Activated naive CD4-positive, alpha-beta T cell treated with anti-CD3 and anti-CD28 coated beads for 36 hours (primary cell): ENCODE measurements at regions of chr6 and their contacts with region 1.

Region 1: GRCh38 chr6:149934249-149935156 is 7.3 kb upstream of the ULBP2 start:
- DNase-seq: peak; percentile 84
- H3K4me3 Mint-ChIP-seq: no peak overlapping the region
- H3K27ac Mint-ChIP-seq: no peak overlapping the region
- H3K4me1 Mint-ChIP-seq: peaks cover 17% of the 10 kb centered on the region
- H3K27me3 Mint-ChIP-seq: peaks cover 71% of the 10 kb centered on the region

Region 2: DNA sequence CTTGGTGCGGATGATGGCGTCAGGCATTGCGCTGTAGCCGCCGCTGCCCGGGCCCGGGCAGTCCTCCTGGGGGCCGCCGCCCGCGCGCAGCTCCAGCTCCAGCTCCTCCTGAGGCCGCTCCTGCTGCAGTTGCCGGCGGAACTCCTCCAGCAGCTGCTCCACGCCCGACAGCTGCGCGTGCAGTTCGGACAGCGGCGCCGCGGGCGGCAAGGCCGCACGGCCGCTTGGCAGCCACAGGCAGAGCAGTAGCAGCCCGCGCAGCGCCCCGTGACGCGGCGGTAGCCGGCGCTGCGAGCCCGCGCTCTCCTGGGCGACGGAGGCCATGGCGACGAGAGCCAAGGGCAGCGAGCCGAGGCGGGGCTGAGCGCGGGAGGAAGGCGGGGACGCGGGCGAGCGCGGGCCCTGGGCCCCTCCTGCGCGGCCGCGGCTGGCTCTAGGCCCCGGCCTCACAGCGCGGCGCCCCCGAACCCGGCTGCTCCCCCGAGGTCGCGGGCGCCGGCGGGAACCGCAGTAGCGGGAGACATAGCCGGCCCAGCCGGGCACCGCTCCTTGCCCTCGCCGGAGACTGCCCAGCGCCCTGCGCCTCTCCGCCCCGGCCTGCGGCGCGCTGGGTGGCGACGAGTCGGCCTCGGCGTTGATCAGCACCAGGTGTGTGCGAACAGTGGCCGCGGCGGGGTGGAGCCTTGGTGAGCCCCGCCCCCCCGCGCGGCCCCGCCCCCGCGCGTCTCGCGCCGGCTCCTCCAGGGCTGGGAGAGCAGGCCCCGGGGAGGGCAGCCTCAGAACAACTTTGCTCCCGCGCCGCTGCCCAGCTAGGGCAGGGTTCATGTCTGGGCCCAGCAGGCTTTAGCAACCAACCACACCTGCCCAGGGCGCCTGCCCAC is 70.6 kb before region 1 on chr6 and contains the start of gene LRP11:
- CTCF ChIA-PET with region 1: no interaction called
- intact Hi-C with region 1: no loop called
- DNase-seq: peak; percentile 80
- H3K4me3 Mint-ChIP-seq: peak within 1 kb of the TSS; percentile 80
- H3K27ac Mint-ChIP-seq: no peak within 1 kb of the TSS
- H3K4me1 Mint-ChIP-seq: peaks cover 6% of the 10 kb centered on the region
- H3K27me3 Mint-ChIP-seq: peaks cover 12% of the 10 kb centered on the region
- total RNA-seq, gene LRP11: 4.6 to 4.7 TPM

Region 3: GRCh38 chr6:149963462-149964307 is 29.2 kb after region 1 on chr6 and contains the start of gene ULBP1:
- CTCF ChIA-PET with region 1: interaction called, 4 read pairs
- intact Hi-C with region 1: loop called (anchors 1 kb)
- DNase-seq: peak; percentile 93
- H3K4me3 Mint-ChIP-seq: peak within 1 kb of the TSS; percentile 90
- H3K27ac Mint-ChIP-seq: peak within 1 kb of the TSS; percentile 78
- H3K4me1 Mint-ChIP-seq: peaks cover 19% of the 10 kb centered on the region
- H3K27me3 Mint-ChIP-seq: peaks cover 63% of the 10 kb centered on the region
- total RNA-seq, gene ULBP1: 2.6 to 2.8 TPM

Region 4: GRCh38 chr6:150016324-150017185 is 82.1 kb after region 1 on chr6:
- CTCF ChIA-PET with region 1: interaction called, 14 read pairs
- intact Hi-C with region 1: loop called (anchors 1 kb)
- DNase-seq: peak; percentile 66
- H3K4me3 Mint-ChIP-seq: no peak overlapping the region
- H3K27ac Mint-ChIP-seq: no peak overlapping the region
- H3K4me1 Mint-ChIP-seq: peaks cover 14% of the 10 kb centered on the region
- H3K27me3 Mint-ChIP-seq: peaks cover 70% of the 10 kb centered on the region

Region 5: GRCh38 chr6:150334790-150335783 is 400.6 kb after region 1 on chr6:
- CTCF ChIA-PET with region 1: no interaction called
- intact Hi-C with region 1: loop called (anchors 1 kb)
- DNase-seq: peak; percentile 64
- H3K4me3 Mint-ChIP-seq: no peak overlapping the region
- H3K27ac Mint-ChIP-seq: no peak overlapping the region
- H3K4me1 Mint-ChIP-seq: no peaks in the 10 kb centered on the region
- H3K27me3 Mint-ChIP-seq: peaks cover 2% of the 10 kb centered on the region

Region 6: DNA sequence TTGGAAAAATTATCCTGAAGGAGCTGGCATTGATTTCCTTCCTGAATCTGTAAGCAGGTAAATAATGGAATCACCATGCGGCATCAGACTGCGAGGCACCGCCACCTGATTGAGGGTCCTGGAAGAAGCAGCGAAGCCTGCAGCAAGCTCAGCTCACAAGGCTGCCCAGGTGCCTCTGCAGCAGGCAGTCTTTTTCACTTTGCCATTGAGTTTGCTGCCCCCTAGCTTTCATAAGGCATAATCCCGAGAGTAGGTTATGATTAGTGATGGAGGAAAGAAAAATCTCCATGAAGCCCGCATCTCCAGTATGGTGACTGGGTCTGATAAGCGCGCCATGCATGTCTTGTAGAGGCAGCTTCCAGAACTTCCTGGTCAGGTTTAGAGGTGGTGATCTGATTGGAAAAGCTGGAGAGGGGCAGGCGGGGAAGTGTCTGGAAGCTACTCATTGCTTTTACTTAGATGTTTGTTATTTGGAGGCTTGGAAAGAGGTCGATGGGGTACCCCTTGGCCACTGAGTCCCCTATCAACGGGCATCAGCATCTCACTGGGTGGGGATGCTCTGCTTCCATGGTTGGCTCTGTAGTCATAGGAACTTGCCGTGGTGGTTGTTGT is 461.0 kb after region 1 on chr6:
- CTCF ChIA-PET with region 1: no interaction called
- intact Hi-C with region 1: loop called (anchors 2 kb)
- DNase-seq: peak; percentile 59
- H3K4me3 Mint-ChIP-seq: no peak overlapping the region
- H3K27ac Mint-ChIP-seq: no peak overlapping the region
- H3K4me1 Mint-ChIP-seq: no peaks in the 10 kb centered on the region
- H3K27me3 Mint-ChIP-seq: peaks cover 8% of the 10 kb centered on the region